Aorta (tissue), 5 donors: ENCODE measurements at regions of chr13 and their contacts with region 1.

Region 1: DNA sequence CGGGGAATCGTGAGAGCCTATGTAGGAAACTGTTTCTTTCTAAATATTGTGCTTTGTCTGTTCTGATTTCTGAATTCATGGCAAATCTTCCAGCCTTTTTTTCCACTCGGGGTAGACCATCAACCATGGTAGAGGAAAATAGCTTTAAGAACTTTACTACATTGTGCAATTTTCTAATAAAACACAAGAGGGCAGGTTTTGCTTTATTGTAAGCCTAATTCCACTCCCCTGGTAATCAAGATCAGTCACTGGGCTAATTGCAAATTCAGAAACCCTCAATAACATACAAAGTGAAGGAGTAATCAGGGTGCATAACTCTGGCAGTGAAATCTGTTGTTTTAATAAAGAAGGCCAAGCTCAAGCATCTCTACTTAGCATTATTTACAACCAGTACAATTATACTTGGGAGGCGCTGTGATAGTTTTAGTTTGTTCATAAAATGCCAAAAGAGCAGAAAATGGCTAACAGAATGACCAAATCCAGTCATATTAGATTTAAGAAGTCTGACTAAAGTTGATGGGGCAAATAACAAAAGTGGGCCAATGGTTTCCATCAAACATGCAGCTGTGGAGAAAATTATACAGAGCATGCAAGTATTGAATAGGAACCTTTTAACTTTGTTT is 43.8 kb downstream of the DCT start:
- DNase-seq: no peak
- ATAC-seq: peak; percentile 72
- H3K4me3 ChIP-seq: no peak overlapping the region
- H3K27ac ChIP-seq: no peak overlapping the region
- H3K4me1 ChIP-seq: no peaks in the 10 kb centered on the region
- H3K27me3 ChIP-seq: no peaks in the 10 kb centered on the region

Region 2: GRCh38 chr13:94617389-94618000 is 181.8 kb after region 1 on chr13:
- intact Hi-C with region 1: loop called (anchors 5 kb)
- DNase-seq: no peak
- ATAC-seq: no peak
- H3K4me3 ChIP-seq: no peak overlapping the region
- H3K27ac ChIP-seq: no peak overlapping the region
- H3K4me1 ChIP-seq: no peaks in the 10 kb centered on the region
- H3K27me3 ChIP-seq: no peaks in the 10 kb centered on the region